Right cardiac atrium (tissue), 5 donors: ENCODE measurements at regions of chr17 and their contacts with region 1.

Region 1: GRCh38 chr17:48024937-48025906 is 12.4 kb downstream of the COPZ2 start:
- DNase-seq: peak; percentile 98 to 100 (median 99)
- ATAC-seq: peak; percentile 92
- H3K4me3 ChIP-seq: peak overlapping the region; percentile 30
- H3K27ac ChIP-seq: peak overlapping the region; percentile 59
- H3K4me1 ChIP-seq: peaks cover 6% of the 10 kb centered on the region
- H3K27me3 ChIP-seq: no peaks in the 10 kb centered on the region

Region 2: DNA sequence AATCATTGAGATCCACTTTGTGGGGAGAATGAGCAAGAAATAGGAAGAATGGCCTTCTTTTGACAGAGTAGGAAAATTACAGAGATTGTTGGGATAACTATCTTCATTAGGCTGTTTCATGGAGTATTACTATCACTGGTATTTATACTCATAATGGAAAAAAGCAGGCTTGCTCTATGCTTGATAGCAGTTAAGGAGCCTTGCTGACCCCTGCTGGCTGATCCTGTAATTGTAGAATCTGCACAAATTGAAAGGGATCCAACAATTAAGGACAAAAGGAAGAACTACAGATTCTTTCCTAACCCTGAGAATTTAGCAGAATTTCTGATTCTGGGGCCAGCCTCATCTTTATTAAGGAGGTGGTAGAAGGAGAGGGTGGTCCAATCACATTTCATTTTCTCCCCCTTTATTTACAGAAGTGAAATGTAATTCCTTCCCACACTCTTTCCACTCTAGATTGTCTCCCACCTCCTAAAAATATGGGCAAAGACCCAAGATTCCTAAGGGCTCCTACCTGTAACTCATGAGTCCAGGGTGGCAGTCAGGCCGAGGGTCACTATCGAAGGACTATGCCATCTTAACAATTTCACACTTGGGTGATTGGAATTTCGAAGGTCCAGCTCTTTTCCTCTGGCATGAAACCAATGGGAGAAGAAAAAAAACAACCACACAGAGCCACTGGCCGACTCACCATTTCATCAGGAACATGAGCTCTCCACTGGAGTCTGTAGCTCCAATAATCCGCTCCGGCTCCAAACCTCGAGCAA is 49.3 kb after region 1 on chr17:
- intact Hi-C with region 1: loop called (anchors 1 to 5 kb)
- DNase-seq: peak; percentile 73 to 88 (median 75)
- ATAC-seq: peak; percentile 85 to 86
- H3K4me3 ChIP-seq: no peak overlapping the region
- H3K27ac ChIP-seq: no peak overlapping the region
- H3K4me1 ChIP-seq: no peaks in the 10 kb centered on the region
- H3K27me3 ChIP-seq: no peaks in the 10 kb centered on the region

Region 3: GRCh38 chr17:48107168-48108132 is 82.2 kb after region 1 on chr17 and contains the start of gene SNX11:
- intact Hi-C with region 1: loop called in 1 of 4 experiments (anchors 10 kb)
- DNase-seq: peak; percentile 89 to 96 (median 96)
- ATAC-seq: peak; percentile 98 to 99
- H3K4me3 ChIP-seq: peak within 1 kb of the TSS; percentile 94
- H3K27ac ChIP-seq: peak within 1 kb of the TSS; percentile 95
- H3K4me1 ChIP-seq: no peaks in the 10 kb centered on the region
- H3K27me3 ChIP-seq: no peaks in the 10 kb centered on the region
- total RNA-seq, gene SNX11: 10.4 to 16.6 (median 13.2) TPM

Region 4: DNA sequence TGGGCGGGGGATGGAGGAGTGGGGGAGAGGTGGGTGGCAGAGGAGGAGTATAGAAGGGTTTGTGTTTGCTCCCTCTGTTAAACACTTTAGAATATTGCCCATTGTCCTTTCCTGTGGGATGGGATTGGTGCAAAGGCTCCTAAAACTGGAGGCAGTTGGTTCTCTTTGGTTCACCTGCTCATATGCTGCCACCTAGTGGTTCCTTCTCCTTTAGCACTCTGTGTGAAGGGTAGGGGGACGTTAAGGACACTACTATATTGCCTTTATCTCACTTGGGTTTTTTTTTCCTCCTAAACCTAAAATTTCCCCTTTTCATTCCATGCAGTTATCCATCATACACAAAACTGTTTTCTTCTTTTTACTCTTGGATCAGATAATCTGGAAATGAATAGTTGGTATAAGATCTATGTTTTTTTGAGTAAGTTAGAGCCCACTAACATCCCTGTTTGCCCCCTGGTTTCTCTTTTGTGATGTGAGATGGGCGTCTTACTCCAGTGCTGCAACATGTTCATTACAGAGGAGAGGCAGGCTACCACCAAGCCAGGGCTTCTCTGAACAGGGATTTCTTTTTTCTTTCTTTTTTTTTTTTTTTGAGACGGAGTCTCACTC is 106.1 kb after region 1 on chr17:
- intact Hi-C with region 1: loop called in 3 of 4 experiments (anchors 2 to 5 kb)
- DNase-seq: no peak
- ATAC-seq: peak; percentile 85 to 91
- H3K4me3 ChIP-seq: no peak overlapping the region
- H3K27ac ChIP-seq: no peak overlapping the region
- H3K4me1 ChIP-seq: no peaks in the 10 kb centered on the region
- H3K27me3 ChIP-seq: no peaks in the 10 kb centered on the region

Region 5: GRCh38 chr17:48618256-48618897 is 593.2 kb after region 1 on chr17:
- intact Hi-C with region 1: loop called in 1 of 4 experiments (anchors 10 kb)
- DNase-seq: peak; percentile 85 to 94 (median 94)
- ATAC-seq: peak; percentile 83 to 91
- H3K4me3 ChIP-seq: no peak overlapping the region
- H3K27ac ChIP-seq: no peak overlapping the region
- H3K4me1 ChIP-seq: no peaks in the 10 kb centered on the region
- H3K27me3 ChIP-seq: no peaks in the 10 kb centered on the region